SK-N-SH (cell line): ENCODE measurements at regions of chr6 and their contacts with region 1.

Region 1: DNA sequence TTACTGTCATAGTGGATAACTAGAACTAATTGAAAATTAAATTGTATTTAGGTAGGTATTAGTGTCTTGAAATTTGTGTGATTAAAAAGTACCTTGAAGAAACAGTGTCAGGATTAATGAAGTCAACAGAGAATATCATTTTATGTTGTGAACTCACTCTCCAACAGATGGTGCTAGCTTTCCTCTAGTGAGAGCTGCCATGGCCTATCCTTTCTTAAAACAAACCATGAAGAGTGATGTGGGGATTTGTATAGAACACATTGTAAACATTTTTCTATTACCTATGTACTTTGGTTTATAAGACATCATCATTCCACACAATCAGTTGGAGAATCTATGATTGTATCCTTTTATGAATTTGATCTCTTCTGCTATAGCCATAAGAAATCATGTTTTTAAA is 4.8 kb upstream of the SRSF12 start:
- DNase-seq: peak; percentile 57
- H3K4me3 ChIP-seq: no peak overlapping the region
- H3K27ac ChIP-seq: no peak overlapping the region
- H3K4me1 ChIP-seq: peaks cover 0 to 4% of the 10 kb centered on the region in 2 experiments; a peak in 1 of 4 replicates
- H3K27me3 ChIP-seq: no peaks in the 10 kb centered on the region
- CTCF ChIP-seq: peak; percentile 68
- EP300 ChIP-seq: no peak
- RAD21 ChIP-seq: peak; percentile 92

Region 2: GRCh38 chr6:89242574-89243330 is 120.1 kb after region 1 on chr6:
- CTCF ChIA-PET with region 1: interaction called, 50 read pairs
- POLR2A ChIA-PET with region 1: no interaction called
- DNase-seq: peak; percentile 61
- H3K4me3 ChIP-seq: no peak overlapping the region
- H3K27ac ChIP-seq: no peak overlapping the region
- H3K4me1 ChIP-seq: no peaks in the 10 kb centered on the region; a peak in 1 of 4 replicates
- H3K27me3 ChIP-seq: no peaks in the 10 kb centered on the region
- CTCF ChIP-seq: peak; percentile 69
- EP300 ChIP-seq: no peak
- RAD21 ChIP-seq: peak; percentile 86